ENCODE measurements at regions of chr9 and their contacts with region 1.

Region 1: GRCh38 chr9:35646533-35647265 is 4.0 kb downstream of the SIT1 start:
- DNase-seq: peak; percentile 66 to 96
- H3K4me3 ChIP-seq: peak overlapping the region; percentile 66 to 68
- H3K27ac ChIP-seq: peak overlapping the region; percentile 94 to 95
- H3K4me1 ChIP-seq: peaks cover 15 to 37% of the 10 kb centered on the region in 2 donors
- H3K27me3 ChIP-seq: no peaks in the 10 kb centered on the region
- CTCF ChIP-seq: peak; percentile 97 to 99 (median 97)

Region 2: DNA sequence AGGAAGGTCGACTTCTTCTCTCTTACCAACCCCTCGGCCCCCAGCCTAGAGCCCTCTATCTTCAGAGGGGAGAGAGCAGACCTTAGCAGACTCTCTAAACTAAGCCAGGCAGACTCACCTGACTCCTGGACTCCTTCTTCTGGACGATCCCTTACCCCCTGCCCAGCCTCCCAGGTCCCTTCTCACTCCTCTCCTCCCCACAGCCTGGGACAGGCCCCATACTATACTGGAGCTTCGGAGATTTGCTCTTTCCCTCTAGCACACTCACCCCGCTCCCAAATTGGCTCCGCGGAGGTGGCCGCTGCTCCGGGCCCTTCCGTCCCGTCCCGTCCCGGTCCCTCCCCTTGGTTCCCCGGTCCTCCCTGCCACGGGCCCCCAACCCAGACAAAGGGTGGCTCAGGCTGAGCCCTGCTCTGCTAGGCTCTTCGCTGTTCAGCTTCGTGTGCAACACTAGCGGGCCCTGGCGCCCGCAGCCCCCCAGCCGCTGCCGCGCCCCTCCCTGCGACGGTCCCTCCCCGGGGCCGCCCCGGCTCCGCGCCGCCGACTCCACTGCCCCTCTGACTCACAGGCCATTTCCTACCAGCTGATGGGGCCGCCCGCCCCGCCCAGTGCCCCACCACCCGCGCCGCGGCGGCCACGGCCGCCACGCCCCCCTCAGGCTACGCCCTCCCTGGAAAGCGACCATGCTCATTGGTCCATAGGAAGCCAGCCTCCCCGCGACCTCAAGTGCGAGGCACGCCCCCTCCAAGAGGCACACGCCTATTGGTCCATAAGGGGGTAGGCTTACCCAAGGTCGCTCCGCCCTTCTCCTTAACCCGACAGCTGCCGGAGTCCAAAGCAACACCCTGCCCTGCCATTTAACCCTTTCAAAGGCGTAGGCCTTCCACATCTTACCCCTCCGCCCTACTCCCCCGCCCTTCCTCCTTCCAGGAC is 535.4 kb before region 1 on chr9:
- intact Hi-C with region 1: loop called (anchors 5 kb)
- DNase-seq: peak; percentile 95 to 99
- H3K4me3 ChIP-seq: peak overlapping the region; percentile 87 to 92
- H3K27ac ChIP-seq: peak overlapping the region; percentile 98 to 99
- H3K4me1 ChIP-seq: peaks cover 16 to 39% of the 10 kb centered on the region in 2 donors
- H3K27me3 ChIP-seq: no peaks in the 10 kb centered on the region
- CTCF ChIP-seq: no peak

Region 3: GRCh38 chr9:35563791-35564197 is 82.9 kb before region 1 on chr9:
- intact Hi-C with region 1: loop called (anchors 2 kb)
- DNase-seq: peak in 1 of 2 donors; percentile 85
- H3K4me3 ChIP-seq: peak overlapping the region; percentile 17 to 19
- H3K27ac ChIP-seq: peak overlapping the region; percentile 83 to 94
- H3K4me1 ChIP-seq: peaks cover 23 to 52% of the 10 kb centered on the region in 2 donors
- H3K27me3 ChIP-seq: no peaks in the 10 kb centered on the region
- CTCF ChIP-seq: no peak

Region 4: GRCh38 chr9:35603987-35604577 is 42.6 kb before region 1 on chr9:
- intact Hi-C with region 1: loop called (anchors 1 kb)
- DNase-seq: peak; percentile 98 to 100
- H3K4me3 ChIP-seq: peak overlapping the region; percentile 92 to 97
- H3K27ac ChIP-seq: peak overlapping the region; percentile 93 to 95
- H3K4me1 ChIP-seq: peaks cover 15 to 26% of the 10 kb centered on the region in 2 donors
- H3K27me3 ChIP-seq: no peaks in the 10 kb centered on the region
- CTCF ChIP-seq: peak; percentile 89 to 96 (median 93)

Region 5: GRCh38 chr9:35732122-35732799 is 85.6 kb after region 1 on chr9 and contains the starts of genes CREB3 and TLN1:
- intact Hi-C with region 1: no loop called
- DNase-seq: peak; percentile 98 to 100
- H3K4me3 ChIP-seq: peak within 1 kb of the TSS; percentile 74 to 81
- H3K27ac ChIP-seq: peak within 1 kb of the TSS; percentile 98 to 99
- H3K4me1 ChIP-seq: peaks cover 18 to 28% of the 10 kb centered on the region in 2 donors
- H3K27me3 ChIP-seq: no peaks in the 10 kb centered on the region
- CTCF ChIP-seq: no peak
- total RNA-seq, gene CREB3: 48.3 TPM
- total RNA-seq, gene TLN1: 735 TPM

Region 6: GRCh38 chr9:35882263-35882848 is 235.7 kb after region 1 on chr9:
- intact Hi-C with region 1: loop called (anchors 5 kb)
- DNase-seq: peak in 1 of 2 donors; percentile 90
- H3K4me3 ChIP-seq: no peak overlapping the region
- H3K27ac ChIP-seq: no peak overlapping the region
- H3K4me1 ChIP-seq: no peaks in the 10 kb centered on the region
- H3K27me3 ChIP-seq: no peaks in the 10 kb centered on the region
- CTCF ChIP-seq: peak; percentile 90 to 96 (median 91)

Region 7: DNA sequence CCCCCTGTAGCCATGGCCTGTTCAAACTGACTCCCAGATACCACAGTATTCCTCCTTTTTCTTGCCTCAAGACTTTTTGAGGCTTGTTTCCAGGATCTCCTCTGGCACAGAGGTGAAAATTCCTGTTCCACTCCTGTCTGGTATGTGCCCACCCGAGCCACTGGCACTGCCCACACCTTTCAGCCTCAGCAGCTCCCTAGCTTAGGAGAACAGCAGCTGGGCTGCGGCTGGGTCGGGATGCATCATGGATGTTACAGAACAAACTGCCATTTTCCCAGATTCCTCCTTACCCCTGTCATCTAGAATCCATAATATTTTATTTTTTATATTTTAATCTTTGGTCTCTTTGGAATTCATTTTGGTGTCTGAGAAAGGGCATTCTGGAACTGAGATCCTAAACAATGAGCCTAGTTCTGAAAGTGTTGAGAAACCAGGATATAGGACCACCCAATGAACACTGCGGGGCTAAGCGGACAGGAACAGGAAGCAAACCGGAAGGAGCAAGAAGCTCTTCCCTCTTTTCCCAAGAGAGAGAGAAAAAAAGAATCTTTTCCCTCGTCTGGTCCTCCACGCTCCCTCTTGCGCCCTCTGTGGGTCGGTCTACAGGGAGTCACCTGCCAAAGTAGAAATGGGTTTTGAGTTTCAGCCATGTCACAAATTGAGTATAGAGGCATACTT is 298.8 kb after region 1 on chr9:
- intact Hi-C with region 1: loop called (anchors 10 kb)
- DNase-seq: peak in 1 of 2 donors; percentile 87
- H3K4me3 ChIP-seq: peak overlapping the region in 1 of 2 donors; percentile 9
- H3K27ac ChIP-seq: peak overlapping the region; percentile 53 to 72
- H3K4me1 ChIP-seq: peaks cover 5 to 21% of the 10 kb centered on the region in 2 donors
- H3K27me3 ChIP-seq: no peaks in the 10 kb centered on the region
- CTCF ChIP-seq: peak; percentile 69 to 87 (median 85)

Measured in ascending aorta (tissue), 2 donors.